G401 (cell line): ENCODE measurements at regions of chr19 and their contacts with region 1.

Region 1: GRCh38 chr19:19192078-19192882 is at the starts of genes BORCS8 and RFXANK:
- DNase-seq: peak; percentile 100
- total RNA-seq, gene BORCS8: 21.4 and 30.2 TPM in 2 replicates
- total RNA-seq, gene RFXANK: 131 and 162 TPM in 2 replicates

Region 2: DNA sequence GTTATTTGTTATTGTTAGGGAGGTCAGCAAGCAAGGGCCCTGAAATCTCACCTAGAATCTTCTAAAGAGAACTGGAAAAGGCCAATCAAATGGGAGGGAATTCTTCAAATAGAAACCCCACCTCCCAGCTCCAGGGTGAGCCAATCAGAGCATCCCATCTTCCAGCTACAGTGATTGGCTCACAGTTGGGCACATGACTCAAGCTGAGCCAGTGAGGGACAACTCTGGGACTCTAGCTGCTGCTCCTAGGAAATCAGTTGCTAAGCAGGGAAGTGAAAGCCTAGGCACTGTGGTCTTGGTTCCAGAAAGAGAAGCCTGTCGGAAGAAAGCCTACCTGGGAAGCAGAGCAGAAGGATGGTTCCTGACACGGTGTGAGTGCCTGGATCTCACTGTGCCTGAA is 67.5 kb after region 1 on chr19:
- in situ Hi-C with region 1: loop called (anchors 10 kb)
- DNase-seq: peak; percentile 60

Region 3: DNA sequence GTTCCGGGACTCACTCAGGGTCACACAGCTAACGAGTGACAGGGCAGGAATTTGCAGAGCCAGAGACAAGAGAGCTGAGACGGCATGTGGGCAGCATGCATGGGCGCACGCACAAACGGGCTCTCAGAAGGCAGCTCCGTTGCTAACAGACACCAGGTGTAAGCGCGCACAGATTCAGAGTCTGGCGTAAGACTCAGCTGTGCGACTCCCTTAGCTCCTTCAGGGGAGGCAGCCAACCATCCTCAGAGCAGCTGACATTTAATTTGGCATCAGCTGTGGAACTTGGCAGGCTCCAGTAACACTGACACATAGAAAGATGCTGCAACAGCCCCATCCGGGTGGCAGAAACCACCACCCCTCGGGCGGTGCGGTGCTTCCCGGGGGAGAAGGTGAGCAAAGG is 88.3 kb after region 1 on chr19:
- in situ Hi-C with region 1: no loop called
- DNase-seq: peak; percentile 82

Region 4: DNA sequence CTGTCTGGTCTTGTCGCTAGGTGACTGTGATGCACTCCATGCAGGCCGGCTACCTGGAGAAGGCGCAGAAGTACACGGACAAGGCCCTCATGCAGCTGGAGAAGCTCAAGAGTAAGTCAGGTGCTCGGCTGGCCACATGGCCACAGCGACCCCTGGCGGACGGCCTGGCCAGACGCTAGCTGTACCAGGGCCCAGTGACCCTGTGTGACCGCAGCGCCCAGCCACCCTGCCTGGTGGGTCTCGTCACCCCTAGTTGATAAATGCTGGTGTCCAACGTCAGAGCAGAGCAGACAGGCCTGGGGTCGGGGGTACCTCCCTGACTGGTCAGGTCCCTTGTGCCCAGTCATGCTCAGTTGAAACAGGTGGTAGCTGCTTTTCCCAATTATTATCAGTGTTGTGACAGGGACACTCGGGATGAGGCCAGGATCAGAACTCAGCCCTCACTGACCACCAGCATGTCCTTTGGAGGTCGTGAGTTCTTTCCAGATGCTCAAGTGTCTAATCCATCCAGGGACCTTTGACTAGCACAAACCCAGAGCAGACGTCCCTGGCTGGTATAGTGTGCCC is 150.6 kb after region 1 on chr19:
- in situ Hi-C with region 1: no loop called
- DNase-seq: peak; percentile 53